ENCODE measurements at regions of chr14 and their contacts with region 1.

Region 1: DNA sequence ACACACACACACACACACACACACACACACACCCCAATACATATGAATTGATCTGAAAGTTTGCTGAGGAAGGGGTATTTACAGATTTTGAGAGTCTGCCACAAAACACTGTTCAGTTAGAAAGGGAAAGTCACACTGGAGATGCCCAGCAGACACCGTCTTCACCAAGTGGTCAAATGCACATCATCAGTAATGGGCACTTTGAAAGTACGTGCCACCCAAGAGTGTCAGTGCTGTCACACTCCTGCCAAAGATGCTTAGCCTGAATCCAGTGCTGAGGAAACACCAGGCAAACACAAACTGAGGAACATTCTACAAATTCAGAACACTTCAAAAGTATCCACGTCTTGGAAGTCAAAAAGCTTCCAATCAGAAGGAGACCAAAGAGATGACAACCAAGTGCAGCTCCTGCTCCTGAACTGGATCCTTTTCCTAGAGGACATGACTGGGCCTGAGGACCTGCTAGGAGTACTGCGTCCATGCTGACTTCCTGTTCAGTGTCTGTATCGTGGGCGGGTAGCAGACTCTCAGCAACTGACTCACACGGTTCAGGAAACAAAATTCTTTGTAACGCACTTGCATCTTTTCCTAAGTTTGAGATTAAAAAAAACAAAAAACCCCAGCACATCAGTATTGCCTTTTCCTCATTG is 18.6 kb downstream of the PSMC1 start:
- DNase-seq: no peak
- ATAC-seq: no peak
- H3K4me3 ChIP-seq: no peak overlapping the region
- H3K27ac ChIP-seq: peak overlapping the region in 3 of 4 donors; percentile 21 to 49 (median 35)
- H3K4me1 ChIP-seq: peaks cover 0 to 9% of the 10 kb centered on the region in 2 donors
- H3K27me3 ChIP-seq: no peaks in the 10 kb centered on the region
- CTCF ChIP-seq: no peak
- POLR2A ChIP-seq: no peak

Region 2: DNA sequence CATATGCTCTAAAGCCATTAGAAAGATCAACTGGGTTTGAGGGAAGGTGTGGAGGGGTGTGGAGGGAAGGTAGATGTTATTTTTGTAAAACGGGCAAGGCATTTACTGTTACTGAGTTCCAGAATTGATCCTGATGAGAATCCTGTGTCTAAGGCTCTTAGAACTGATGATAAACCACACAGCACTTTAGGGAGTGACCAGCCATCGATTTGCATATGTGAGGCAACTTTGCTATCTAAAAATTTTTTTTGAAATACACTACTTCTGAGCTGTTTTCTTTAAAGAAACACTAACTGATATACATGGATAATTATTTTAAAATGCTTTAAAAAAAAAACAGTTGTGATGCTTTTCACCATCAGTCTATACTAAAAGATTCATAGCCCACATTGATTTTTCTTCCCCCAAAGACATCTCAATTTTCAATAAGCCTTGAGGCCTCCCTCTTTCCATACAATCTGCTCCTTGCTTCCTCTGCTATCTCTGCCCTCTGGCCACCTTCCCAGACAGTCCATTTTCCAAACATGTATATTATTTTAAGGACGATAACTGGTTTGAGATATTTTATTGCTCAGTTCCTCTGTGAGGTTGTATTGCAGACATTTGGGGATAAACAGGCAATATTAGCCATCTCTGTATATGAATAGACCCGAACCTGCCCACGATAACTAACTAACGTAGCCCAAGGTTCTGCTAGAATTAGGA is 586.3 kb before region 1 on chr14:
- in situ Hi-C with region 1: no loop called
- intact Hi-C with region 1: loop called (anchors 5 kb)
- DNase-seq: no peak
- ATAC-seq: no peak
- H3K4me3 ChIP-seq: no peak overlapping the region
- H3K27ac ChIP-seq: no peak overlapping the region
- H3K4me1 ChIP-seq: no peaks in the 10 kb centered on the region
- H3K27me3 ChIP-seq: no peaks in the 10 kb centered on the region
- CTCF ChIP-seq: no peak
- POLR2A ChIP-seq: no peak

Region 3: DNA sequence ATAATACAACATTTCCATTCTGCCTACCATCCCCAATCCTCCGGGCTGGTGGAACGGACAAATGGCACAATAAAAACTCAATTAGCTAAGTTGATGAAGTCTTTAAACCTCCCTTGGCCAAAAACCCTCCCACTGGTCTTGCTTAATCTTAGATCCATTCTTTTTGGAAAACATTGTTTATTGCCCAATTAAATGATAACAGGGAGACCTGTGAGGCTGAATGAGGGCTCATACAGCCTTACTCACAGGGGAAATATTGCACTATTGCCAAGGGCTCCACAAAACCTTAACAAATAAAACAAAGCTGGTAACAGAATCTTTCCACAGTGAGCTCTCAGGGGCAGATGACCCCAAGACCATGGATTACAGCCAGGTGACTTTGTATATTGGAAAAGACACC is 26.3 kb before region 1 on chr14:
- in situ Hi-C with region 1: no loop called
- intact Hi-C with region 1: no loop called
- DNase-seq: no peak
- ATAC-seq: no peak
- H3K4me3 ChIP-seq: no peak overlapping the region
- H3K27ac ChIP-seq: no peak overlapping the region
- H3K4me1 ChIP-seq: no peaks in the 10 kb centered on the region
- H3K27me3 ChIP-seq: no peaks in the 10 kb centered on the region
- CTCF ChIP-seq: no peak
- POLR2A ChIP-seq: no peak

Region 4: GRCh38 chr14:90288651-90289355 is 13.9 kb after region 1 on chr14:
- in situ Hi-C with region 1: no loop called
- intact Hi-C with region 1: no loop called
- DNase-seq: no peak
- ATAC-seq: no peak
- H3K4me3 ChIP-seq: no peak overlapping the region
- H3K27ac ChIP-seq: peak overlapping the region in 1 of 4 donors; percentile 5
- H3K4me1 ChIP-seq: no peaks in the 10 kb centered on the region
- H3K27me3 ChIP-seq: no peaks in the 10 kb centered on the region
- CTCF ChIP-seq: no peak
- POLR2A ChIP-seq: no peak

Region 5: GRCh38 chr14:90355540-90356518 is 80.9 kb after region 1 on chr14:
- in situ Hi-C with region 1: no loop called
- intact Hi-C with region 1: no loop called
- DNase-seq: no peak
- ATAC-seq: no peak
- H3K4me3 ChIP-seq: no peak overlapping the region
- H3K27ac ChIP-seq: no peak overlapping the region
- H3K4me1 ChIP-seq: no peaks in the 10 kb centered on the region
- H3K27me3 ChIP-seq: no peaks in the 10 kb centered on the region
- CTCF ChIP-seq: no peak
- POLR2A ChIP-seq: no peak

Region 6: DNA sequence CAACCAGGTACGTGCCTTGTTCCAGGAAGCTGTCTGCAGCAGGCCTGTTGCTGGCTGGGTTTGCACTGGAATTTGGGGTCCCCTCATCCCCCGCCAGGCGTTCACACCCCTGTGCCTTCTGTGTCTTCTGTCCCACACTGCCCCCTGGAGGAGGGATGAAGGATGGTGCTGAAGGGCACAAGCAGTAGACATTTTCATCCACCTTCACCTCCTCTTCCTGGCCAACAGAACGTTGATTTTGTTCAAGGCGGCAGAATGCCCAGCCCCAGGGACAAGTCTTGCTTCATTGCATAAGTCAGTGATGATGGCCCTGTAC is 244.0 kb after region 1 on chr14:
- in situ Hi-C with region 1: no loop called
- intact Hi-C with region 1: no loop called
- DNase-seq: no peak
- ATAC-seq: no peak
- H3K4me3 ChIP-seq: no peak overlapping the region
- H3K27ac ChIP-seq: peak overlapping the region in 1 of 4 donors; percentile 35
- H3K4me1 ChIP-seq: peaks cover 24 to 33% of the 10 kb centered on the region in 2 donors
- H3K27me3 ChIP-seq: no peaks in the 10 kb centered on the region
- CTCF ChIP-seq: peak in 3 of 5 experiments; percentile 35 to 45 (median 40)
- POLR2A ChIP-seq: no peak

Measured in gastrocnemius medialis (tissue), 4 donors.